Dorsolateral prefrontal cortex (tissue), 120 donors: ENCODE measurements at regions of chr20 and their contacts with region 1.

Region 1: DNA sequence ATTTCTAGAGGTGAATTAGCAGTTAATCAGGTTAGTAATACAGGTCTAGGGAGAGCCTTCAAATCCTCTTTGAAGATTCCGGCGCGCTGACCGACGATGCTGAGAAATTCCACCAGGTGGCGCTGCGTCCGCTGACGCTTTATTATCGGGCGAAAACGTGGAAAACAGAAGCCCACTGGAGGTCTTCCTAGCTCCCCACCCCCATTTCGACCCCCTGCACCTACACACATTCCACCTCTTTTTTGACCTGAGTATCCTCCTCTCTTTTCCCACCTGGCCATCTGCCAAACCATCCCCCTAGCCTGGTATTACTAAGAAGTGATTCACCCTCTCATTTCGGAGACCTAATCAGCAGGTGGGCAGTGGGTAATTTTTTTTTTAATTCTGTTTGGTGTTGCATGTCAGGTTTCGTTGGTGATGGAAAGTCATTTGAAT is 65.4 kb upstream of the RIN2 start:
- DNase-seq: peak in 9 of 10 donors; percentile 41 to 74 (median 62)
- H3K4me3 ChIP-seq: peak overlapping the region in 20 of 59 donors; percentile 8 to 47 (median 25)
- H3K27ac ChIP-seq: no peak overlapping the region
- H3K27me3 ChIP-seq: no peaks in the 10 kb centered on the region
- CTCF ChIP-seq: peak; percentile 84 to 99 (median 94)

Region 2: GRCh38 chr20:19757487-19758132 is 64.9 kb after region 1 on chr20:
- intact Hi-C with region 1: loop called in 1 of 2 experiments (anchors 5 kb)
- DNase-seq: peak; percentile 32 to 86 (median 70)
- H3K4me3 ChIP-seq: peak overlapping the region; percentile 53 to 90 (median 75)
- H3K27ac ChIP-seq: peak overlapping the region; percentile 40 to 96 (median 89)
- H3K27me3 ChIP-seq: peaks cover 0 to 6% (median 0%) of the 10 kb centered on the region in 45 donors
- CTCF ChIP-seq: peak in 2 of 56 donors; percentile 9

Region 3: GRCh38 chr20:19889011-19889953 is 196.6 kb after region 1 on chr20:
- intact Hi-C with region 1: loop called (anchors 5 kb)
- DNase-seq: peak in 9 of 10 donors; percentile 41 to 62 (median 56)
- H3K4me3 ChIP-seq: peak overlapping the region; percentile 18 to 63 (median 45)
- H3K27ac ChIP-seq: peak overlapping the region; percentile 69 to 98 (median 92)
- H3K27me3 ChIP-seq: no peaks in the 10 kb centered on the region
- CTCF ChIP-seq: peak in 1 of 56 donors; percentile 8

Region 4: DNA sequence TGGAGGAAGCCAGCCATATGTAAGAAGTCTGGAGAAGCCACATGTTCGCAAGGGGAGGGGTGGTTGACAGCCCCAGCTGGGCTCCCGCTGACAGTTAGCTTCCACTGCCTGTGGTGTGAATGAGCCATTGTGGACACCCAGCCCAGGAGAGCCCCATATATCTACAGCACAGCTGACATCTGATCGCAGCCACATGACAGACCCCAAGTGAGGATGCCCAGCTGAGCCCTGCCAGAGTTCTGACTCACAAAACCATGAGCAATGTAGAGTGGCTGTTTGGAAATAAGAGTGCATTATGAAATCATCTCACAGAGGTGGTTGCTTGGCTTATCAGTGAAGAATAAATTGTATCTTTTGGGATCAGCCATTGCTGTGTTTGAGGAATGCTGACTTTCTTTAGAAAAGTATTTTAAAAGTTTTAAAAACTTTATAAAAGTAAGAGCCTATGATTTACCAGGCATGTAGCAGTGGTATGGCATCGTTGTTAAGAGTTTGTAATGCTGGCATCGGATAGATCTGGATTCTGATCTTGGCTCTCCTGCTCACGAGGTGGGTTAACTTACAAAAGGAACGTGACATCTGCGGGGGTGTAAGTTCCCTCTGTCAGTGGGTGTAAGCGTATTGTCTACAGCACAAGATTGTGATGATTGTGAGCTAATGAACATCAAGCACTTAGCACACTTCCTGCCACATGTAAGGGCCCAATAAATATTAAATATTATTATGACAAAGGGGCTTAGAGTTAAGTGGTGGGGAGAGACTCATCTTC is 383.8 kb after region 1 on chr20:
- intact Hi-C with region 1: loop called in 1 of 2 experiments (anchors 10 kb)
- DNase-seq: peak in 9 of 10 donors; percentile 74 to 95 (median 92)
- H3K4me3 ChIP-seq: no peak overlapping the region
- H3K27ac ChIP-seq: peak overlapping the region in 4 of 59 donors; percentile 6 to 56 (median 32)
- H3K27me3 ChIP-seq: no peaks in the 10 kb centered on the region
- CTCF ChIP-seq: peak in 6 of 56 donors; percentile 11 to 38 (median 27)

Region 5: DNA sequence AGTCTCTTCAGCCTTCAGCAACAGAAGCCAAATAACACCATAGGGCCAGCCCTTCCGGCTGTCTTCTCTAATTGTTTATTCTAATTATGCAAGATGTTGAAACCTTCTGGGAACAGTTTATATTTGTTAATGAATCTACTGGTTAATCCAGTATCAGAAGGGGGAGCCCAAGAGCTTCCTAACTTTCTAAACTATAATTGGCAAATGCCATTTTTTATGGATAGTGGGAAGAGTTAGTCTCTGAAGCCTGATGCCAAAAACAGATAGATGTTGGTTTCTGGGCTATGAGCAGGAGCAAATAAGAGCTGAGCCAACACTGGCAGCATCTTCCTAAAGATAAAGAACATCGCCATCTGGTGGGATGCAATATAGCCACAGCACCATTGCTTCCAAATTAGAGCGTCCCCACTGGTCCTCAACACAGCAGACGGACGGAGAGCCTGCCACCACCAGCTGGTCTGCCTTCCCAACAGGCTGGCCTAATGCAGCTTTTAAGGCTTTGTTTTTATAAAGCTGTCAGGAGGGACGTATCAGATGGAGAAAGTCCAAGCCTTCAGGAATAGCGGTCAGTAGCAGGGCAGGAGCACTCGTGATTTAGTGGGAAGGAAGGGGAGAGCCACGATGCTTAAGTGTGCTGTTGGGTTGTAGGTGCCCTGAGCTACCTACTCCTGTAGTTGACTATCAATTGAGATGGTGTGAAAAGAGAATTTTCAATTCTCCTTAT is 900.9 kb after region 1 on chr20:
- intact Hi-C with region 1: loop called in 1 of 2 experiments (anchors 10 kb)
- DNase-seq: peak in 9 of 10 donors; percentile 19 to 80 (median 52)
- H3K4me3 ChIP-seq: peak overlapping the region in 14 of 59 donors; percentile 2 to 39 (median 15)
- H3K27ac ChIP-seq: peak overlapping the region in 49 of 59 donors; percentile 4 to 80 (median 58)
- H3K27me3 ChIP-seq: no peaks in the 10 kb centered on the region
- CTCF ChIP-seq: peak in 55 of 56 donors; percentile 24 to 66 (median 51)